BJ (cell line): ENCODE measurements at regions of chr16 and their contacts with region 1.

Region 1: DNA sequence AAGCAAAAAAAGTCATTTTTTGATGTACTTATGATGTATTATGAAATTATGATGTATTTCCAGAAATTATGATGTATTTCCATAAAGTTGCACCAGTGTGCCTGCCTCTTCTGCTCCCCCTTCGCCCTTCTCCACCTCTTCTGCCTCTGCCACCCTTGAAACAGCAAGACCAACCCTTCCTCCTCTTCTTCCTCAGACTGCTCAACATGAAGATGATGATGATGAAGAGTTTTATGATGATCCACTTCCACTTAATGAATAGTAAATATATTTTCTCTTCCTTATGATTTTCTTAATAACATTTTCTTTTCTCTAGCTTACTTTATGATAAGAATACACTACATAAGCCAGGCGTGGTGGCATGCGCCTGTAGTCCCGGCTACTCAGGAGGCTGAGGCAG is 7.4 kb upstream of the ZNF785 start:
- DNase-seq: no peak
- H3K4me3 ChIP-seq: no peak overlapping the region
- H3K27me3 ChIP-seq: no peaks in the 10 kb centered on the region
- CTCF ChIP-seq: no peak

Region 2: GRCh38 chr16:30499284-30499683 is 93.6 kb before region 1 on chr16:
- CTCF ChIA-PET with region 1: no interaction called
- POLR2A ChIA-PET with region 1: no interaction called
- DNase-seq: no peak
- H3K4me3 ChIP-seq: no peak overlapping the region
- H3K27me3 ChIP-seq: peaks cover 5% of the 10 kb centered on the region
- CTCF ChIP-seq: no peak

Region 3: GRCh38 chr16:30541502-30542329 is 51.2 kb before region 1 on chr16:
- CTCF ChIA-PET with region 1: no interaction called
- POLR2A ChIA-PET with region 1: interaction called, 14 read pairs
- DNase-seq: no peak
- H3K4me3 ChIP-seq: no peak overlapping the region
- H3K27me3 ChIP-seq: no peaks in the 10 kb centered on the region
- CTCF ChIP-seq: no peak